K562 (cell line): ENCODE measurements at regions of chr1 and their contacts with region 1.

Region 1: GRCh38 chr1:29156543-29157268 is 25.0 kb downstream of the SRSF4 start:
- DNase-seq: peak; percentile 59 to 97 (median 70)
- ATAC-seq: peak; percentile 93
- H3K4me3 ChIP-seq: peak overlapping the region; percentile 8; the same call in 1 of the 2 replicates
- H3K27ac ChIP-seq: peak overlapping the region; percentile 90
- H3K4me1 ChIP-seq: peaks cover 30 to 34% of the 10 kb centered on the region in 2 experiments
- H3K27me3 ChIP-seq: no peaks in the 10 kb centered on the region
- CTCF ChIP-seq: 0 out of 6 replicates have a peak, but pooled peaks of 1 of the 3 experiments have one; percentile 4
- EP300 ChIP-seq: peak; percentile 98
- POLR2A ChIP-seq: peak; percentile 50
- RAD21 ChIP-seq: peak in 1 of 2 experiments; percentile 33; a peak in 2 of 4 replicates

Region 2: GRCh38 chr1:28437934-28438699 is 718.6 kb before region 1 on chr1:
- CTCF ChIA-PET with region 1: no interaction called
- POLR2A ChIA-PET with region 1: no interaction called
- in situ Hi-C with region 1: no loop called
- intact Hi-C with region 1: no loop called
- DNase-seq: peak in 2 of 4 experiments; percentile 26 to 61
- ATAC-seq: peak; percentile 61
- H3K4me3 ChIP-seq: peak overlapping the region; percentile 2; the same call in 1 of the 2 replicates
- H3K27ac ChIP-seq: peak overlapping the region; percentile 41; the same call in 2 of the 3 replicates
- H3K4me1 ChIP-seq: peaks cover 17 to 22% of the 10 kb centered on the region in 2 experiments
- H3K27me3 ChIP-seq: no peaks in the 10 kb centered on the region
- CTCF ChIP-seq: no peak
- EP300 ChIP-seq: no peak
- POLR2A ChIP-seq: no peak
- RAD21 ChIP-seq: no peak

Region 3: DNA sequence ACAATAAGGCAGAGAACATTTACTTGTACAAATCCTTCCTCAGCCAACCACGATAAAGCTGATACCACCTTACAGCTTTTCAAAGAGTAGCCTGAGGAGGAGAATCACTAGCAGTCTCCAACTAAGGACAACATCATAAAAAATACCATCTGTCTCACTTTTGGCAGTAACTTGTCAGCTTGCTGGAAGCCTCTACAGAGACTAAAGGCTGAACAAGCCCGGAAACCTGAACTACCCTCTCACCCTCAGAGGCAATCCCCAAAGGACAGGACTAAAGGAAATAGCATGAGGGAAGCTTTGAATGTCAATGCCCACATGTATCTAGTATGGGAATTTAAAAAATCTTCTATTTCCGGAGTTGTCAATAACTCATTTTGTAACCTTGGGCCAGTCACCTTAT is 14.4 kb after region 1 on chr1:
- CTCF ChIA-PET with region 1: no interaction called
- POLR2A ChIA-PET with region 1: interaction called, 129 read pairs
- in situ Hi-C with region 1: no loop called
- intact Hi-C with region 1: no loop called
- DNase-seq: no peak
- ATAC-seq: peak; percentile 62
- H3K4me3 ChIP-seq: no peak overlapping the region
- H3K27ac ChIP-seq: peak overlapping the region; percentile 1; the same call in 1 of the 3 replicates
- H3K4me1 ChIP-seq: peaks cover 3% of the 10 kb centered on the region in 2 experiments; a peak in 3 of 5 replicates
- H3K27me3 ChIP-seq: no peaks in the 10 kb centered on the region
- CTCF ChIP-seq: no peak
- EP300 ChIP-seq: no peak
- POLR2A ChIP-seq: no peak
- RAD21 ChIP-seq: no peak

Region 4: DNA sequence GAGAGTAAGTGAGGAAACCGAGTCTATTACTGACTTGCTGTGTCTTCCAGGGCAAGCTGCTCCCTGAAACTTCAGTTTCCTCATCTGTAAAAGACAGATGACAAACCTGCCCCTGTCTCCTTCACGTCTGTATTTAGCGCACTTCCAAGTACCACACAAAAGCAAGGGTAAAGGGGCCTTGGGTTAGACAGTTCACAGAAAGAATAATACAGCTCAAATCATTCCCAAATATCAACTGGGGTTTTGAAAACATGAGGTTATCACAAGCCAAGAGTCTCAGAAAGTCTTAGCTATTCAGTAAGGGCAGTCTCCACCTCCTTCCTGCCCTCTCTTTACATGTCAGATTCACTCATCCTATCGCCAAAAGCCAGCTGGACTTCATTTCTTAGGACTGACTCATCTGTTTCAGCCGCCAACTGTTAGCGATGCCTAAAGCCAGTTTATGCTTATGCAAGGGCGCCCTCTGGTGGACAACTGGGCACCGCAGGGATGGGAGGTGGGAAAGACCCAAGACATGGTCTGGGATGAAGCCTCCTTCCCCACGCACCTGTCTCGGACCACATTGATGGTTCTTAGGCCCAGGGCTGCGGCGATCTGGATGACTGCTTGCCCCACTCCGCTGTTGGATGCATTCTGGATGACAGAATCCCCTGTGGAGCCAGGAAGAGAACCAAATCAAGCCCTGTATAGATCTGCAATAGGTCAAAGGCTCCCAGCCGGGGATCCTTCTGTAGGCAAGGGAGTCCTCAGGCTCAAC is 46.1 kb after region 1 on chr1:
- CTCF ChIA-PET with region 1: no interaction called
- POLR2A ChIA-PET with region 1: no interaction called
- in situ Hi-C with region 1: no loop called
- intact Hi-C with region 1: loop called (anchors 1 kb)
- DNase-seq: peak; percentile 95 to 99 (median 96)
- ATAC-seq: peak; percentile 99
- H3K4me3 ChIP-seq: no peak overlapping the region
- H3K27ac ChIP-seq: peak overlapping the region; percentile 78
- H3K4me1 ChIP-seq: peaks cover 22 to 27% of the 10 kb centered on the region in 2 experiments
- H3K27me3 ChIP-seq: no peaks in the 10 kb centered on the region
- CTCF ChIP-seq: peak; percentile 94 to 99 (median 99)
- EP300 ChIP-seq: peak; percentile 92
- POLR2A ChIP-seq: no peak
- RAD21 ChIP-seq: peak; percentile 99